Dendritic cell treated with granulocyte-macrophage colony-stimulating factor and Interleukin-4, amounts not matched to agents 40 ng/mL and 50 ng/mL, for 4 days (primary cell): ENCODE measurements at regions of chr20 and their contacts with region 1.

Region 1: DNA sequence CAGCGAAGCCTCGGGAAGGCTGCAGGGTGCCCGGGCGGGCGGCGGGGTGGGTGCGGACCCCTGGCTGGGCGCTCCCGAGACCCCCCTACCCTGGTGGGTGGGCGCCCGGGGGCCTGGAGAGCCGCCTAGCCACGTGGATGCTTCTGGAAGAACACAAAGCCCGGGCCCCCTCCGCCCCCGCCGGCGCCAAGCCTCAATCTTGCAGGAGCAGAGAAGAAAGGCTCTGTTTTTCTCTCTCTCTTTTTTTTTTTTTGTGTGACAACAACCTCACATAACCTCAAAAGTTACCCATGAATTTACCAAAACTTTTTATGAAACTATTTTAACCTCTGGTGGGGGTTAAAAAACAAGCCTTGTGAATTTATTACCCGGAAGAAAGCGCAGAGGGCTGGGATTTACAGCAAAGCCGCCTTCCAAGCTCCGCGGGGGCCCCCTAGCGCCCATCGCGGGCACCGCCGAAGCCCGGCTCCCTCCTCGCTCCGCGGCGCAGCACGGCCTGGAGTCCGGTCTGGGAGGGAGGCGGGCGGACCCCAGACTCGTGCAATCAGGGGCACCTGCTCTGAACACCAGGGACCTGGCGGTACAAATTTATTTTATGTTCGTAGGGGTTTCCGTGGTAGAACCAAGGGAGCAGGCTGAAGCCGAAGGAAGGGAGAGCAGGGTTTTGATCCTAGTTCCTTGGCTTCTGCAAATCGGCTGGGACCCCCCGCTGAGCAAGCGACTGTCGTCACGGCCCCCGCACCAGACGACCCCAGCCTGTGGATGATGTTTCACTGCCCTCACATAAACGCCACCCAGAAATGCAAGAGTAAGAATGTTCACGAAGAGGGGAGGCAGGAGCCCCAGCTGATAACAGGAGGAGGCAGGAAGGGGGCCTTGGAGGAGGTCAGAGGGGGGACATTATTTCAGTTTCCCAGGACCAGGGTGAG is 58.9 kb downstream of the ZNF831 start:
- H3K4me3 Mint-ChIP-seq: peak overlapping the region; percentile 73
- H3K27ac Mint-ChIP-seq: peak overlapping the region; percentile 44
- H3K4me1 Mint-ChIP-seq: peaks cover 11% of the 10 kb centered on the region
- H3K27me3 Mint-ChIP-seq: peaks cover 56% of the 10 kb centered on the region

Region 2: GRCh38 chr20:58870239-58871014 is 352.1 kb before region 1 on chr20:
- intact Hi-C with region 1: loop called (anchors 5 kb)
- H3K4me3 Mint-ChIP-seq: no peak overlapping the region
- H3K27ac Mint-ChIP-seq: no peak overlapping the region
- H3K4me1 Mint-ChIP-seq: peaks cover 13% of the 10 kb centered on the region
- H3K27me3 Mint-ChIP-seq: peaks cover 34% of the 10 kb centered on the region

Region 3: DNA sequence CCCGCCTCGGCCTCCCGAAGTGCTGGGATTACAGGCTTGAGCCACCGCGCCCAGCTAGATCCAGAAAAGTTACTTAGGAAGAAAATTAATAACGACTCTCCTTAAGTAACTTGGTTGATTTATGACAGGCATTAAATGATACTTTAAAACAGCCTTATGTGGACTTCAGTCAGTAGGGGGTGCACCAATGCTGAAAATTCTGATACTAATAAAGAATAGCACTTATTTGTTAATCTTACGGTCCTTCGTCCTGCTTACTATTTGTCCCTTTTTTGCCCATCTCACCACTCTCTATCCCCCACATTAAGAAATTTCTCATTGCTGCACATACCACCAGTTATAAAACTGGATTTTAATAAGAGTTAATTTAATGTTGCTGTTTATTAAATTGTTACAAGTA is 167.2 kb before region 1 on chr20:
- intact Hi-C with region 1: loop called (anchors 2 kb)
- H3K4me3 Mint-ChIP-seq: no peak overlapping the region
- H3K27ac Mint-ChIP-seq: no peak overlapping the region
- H3K4me1 Mint-ChIP-seq: no peaks in the 10 kb centered on the region
- H3K27me3 Mint-ChIP-seq: peaks cover 32% of the 10 kb centered on the region

Region 4: DNA sequence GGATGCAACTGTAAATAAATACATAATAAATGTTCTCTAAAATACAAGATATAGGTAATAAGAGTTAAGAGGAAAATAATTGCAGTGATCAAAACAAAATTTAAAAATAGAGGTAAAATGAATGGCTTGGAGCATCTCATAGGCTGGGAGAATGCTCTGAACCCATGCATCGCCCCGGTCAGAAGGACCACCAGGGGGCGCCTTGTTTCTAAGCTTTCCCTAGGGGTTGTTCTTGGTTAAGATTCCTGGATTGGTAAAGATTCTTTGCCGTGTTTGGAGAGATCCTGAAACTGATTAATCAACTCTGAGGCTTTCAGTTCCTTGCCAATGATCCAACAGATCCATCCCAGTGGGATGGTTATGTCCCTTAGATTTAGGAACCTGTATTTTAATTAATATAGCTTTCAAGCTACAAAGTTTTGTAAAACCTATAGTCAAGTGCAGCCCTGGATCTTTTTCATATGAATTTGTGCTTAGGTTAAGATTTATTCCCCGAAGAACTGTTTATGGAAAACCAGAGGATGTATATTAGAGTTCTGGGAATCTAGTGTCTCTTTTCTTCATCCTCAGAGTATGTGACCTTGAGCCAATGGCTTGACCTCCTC is 134.6 kb before region 1 on chr20:
- intact Hi-C with region 1: loop called (anchors 2 kb)
- H3K4me3 Mint-ChIP-seq: no peak overlapping the region
- H3K27ac Mint-ChIP-seq: no peak overlapping the region
- H3K4me1 Mint-ChIP-seq: no peaks in the 10 kb centered on the region
- H3K27me3 Mint-ChIP-seq: peaks cover 15% of the 10 kb centered on the region

Region 5: GRCh38 chr20:59242714-59243113 is 20.2 kb after region 1 on chr20:
- intact Hi-C with region 1: no loop called
- H3K4me3 Mint-ChIP-seq: no peak overlapping the region
- H3K27ac Mint-ChIP-seq: no peak overlapping the region
- H3K4me1 Mint-ChIP-seq: peaks cover 5% of the 10 kb centered on the region
- H3K27me3 Mint-ChIP-seq: peaks cover 26% of the 10 kb centered on the region

Region 6: GRCh38 chr20:59403261-59403961 is 180.9 kb after region 1 on chr20:
- intact Hi-C with region 1: loop called (anchors 10 kb)
- H3K4me3 Mint-ChIP-seq: no peak overlapping the region
- H3K27ac Mint-ChIP-seq: no peak overlapping the region
- H3K4me1 Mint-ChIP-seq: no peaks in the 10 kb centered on the region
- H3K27me3 Mint-ChIP-seq: peaks cover 2% of the 10 kb centered on the region